GM12878 (cell line): ENCODE measurements at regions of chr1 and their contacts with region 1.

Region 1: GRCh38 chr1:201023517-201023902 is at the start of gene KIF21B:
- DNase-seq: no peak
- ATAC-seq: peak; percentile 68
- H3K4me3 ChIP-seq: peak within 1 kb of the TSS; percentile 93
- H3K27ac ChIP-seq: peak within 1 kb of the TSS; percentile 94
- H3K4me1 ChIP-seq: peaks cover 81% of the 10 kb centered on the region
- H3K27me3 ChIP-seq: no peaks in the 10 kb centered on the region
- CTCF ChIP-seq: no peak
- EP300 ChIP-seq: no peak
- POLR2A ChIP-seq: peak; percentile 74
- RAD21 ChIP-seq: no peak
- polyA plus RNA-seq, gene KIF21B: 2.3 to 2.9 TPM

Region 2: GRCh38 chr1:200890818-200891773 is 132.4 kb before region 1 on chr1:
- CTCF ChIA-PET with region 1: interaction called, 16 read pairs
- POLR2A ChIA-PET with region 1: interaction called, 23 read pairs
- RAD21 ChIA-PET with region 1: interaction called, 38 read pairs
- SMC1A ChIA-PET with region 1: interaction called, 23 read pairs
- in situ Hi-C with region 1: no loop called
- intact Hi-C with region 1: loop called (anchors 5 kb)
- DNase-seq: no peak
- ATAC-seq: peak; percentile 5
- H3K4me3 ChIP-seq: peak overlapping the region; percentile 45
- H3K27ac ChIP-seq: peak overlapping the region; percentile 69; the same call in 1 of the 2 replicates
- H3K4me1 ChIP-seq: peaks cover 61% of the 10 kb centered on the region
- H3K27me3 ChIP-seq: no peaks in the 10 kb centered on the region
- CTCF ChIP-seq: peak; percentile 42 to 58 (median 47)
- EP300 ChIP-seq: no peak
- POLR2A ChIP-seq: peak; percentile 53; the same call in 1 of the 2 replicates
- RAD21 ChIP-seq: peak; percentile 26; the same call in 1 of the 2 replicates

Region 3: DNA sequence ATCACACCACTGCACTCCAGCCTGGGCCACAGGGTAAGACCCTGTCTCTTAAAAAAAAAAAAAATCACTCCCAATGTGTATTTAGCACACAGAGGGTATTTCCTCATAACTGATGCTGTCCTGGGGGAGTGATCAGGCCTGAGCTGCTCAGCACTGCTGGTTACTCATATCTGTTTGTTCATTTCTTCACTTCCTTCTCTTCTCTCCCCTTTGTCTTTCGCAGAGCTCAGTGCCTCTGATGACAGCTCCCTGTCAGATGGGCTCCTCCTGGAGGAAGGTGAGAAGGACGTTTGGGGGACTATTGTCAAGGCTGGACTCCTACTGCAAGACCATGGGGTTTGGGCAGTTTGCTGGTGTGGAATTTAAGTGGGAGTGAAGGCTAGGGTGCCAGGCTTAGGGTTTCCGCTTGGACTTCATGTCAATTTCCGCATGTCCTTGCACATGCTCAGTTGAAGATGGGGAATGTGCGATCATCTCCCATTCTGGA is 115.9 kb before region 1 on chr1:
- CTCF ChIA-PET with region 1: interaction called, 3 read pairs
- POLR2A ChIA-PET with region 1: interaction called, 11 read pairs
- RAD21 ChIA-PET with region 1: interaction called, 19 read pairs
- SMC1A ChIA-PET with region 1: interaction called, 6 read pairs
- in situ Hi-C with region 1: no loop called
- intact Hi-C with region 1: no loop called
- DNase-seq: peak; percentile 67
- ATAC-seq: peak; percentile 74
- H3K4me3 ChIP-seq: no peak overlapping the region
- H3K27ac ChIP-seq: no peak overlapping the region
- H3K4me1 ChIP-seq: peaks cover 15% of the 10 kb centered on the region
- H3K27me3 ChIP-seq: no peaks in the 10 kb centered on the region
- CTCF ChIP-seq: peak in 1 of 3 experiments; percentile 26; a peak in 1 of 6 replicates
- EP300 ChIP-seq: peak; percentile 44 to 60; a peak in 2 of 4 replicates
- POLR2A ChIP-seq: no peak
- RAD21 ChIP-seq: peak; percentile 46

Region 4: GRCh38 chr1:201036188-201036842 is 12.8 kb after region 1 on chr1:
- CTCF ChIA-PET with region 1: interaction called, 250 read pairs
- POLR2A ChIA-PET with region 1: interaction called, 13 read pairs
- RAD21 ChIA-PET with region 1: interaction called, 24 read pairs
- SMC1A ChIA-PET with region 1: interaction called, 91 read pairs
- in situ Hi-C with region 1: no loop called
- intact Hi-C with region 1: no loop called
- DNase-seq: no peak
- ATAC-seq: no peak
- H3K4me3 ChIP-seq: no peak overlapping the region
- H3K27ac ChIP-seq: no peak overlapping the region
- H3K4me1 ChIP-seq: no peaks in the 10 kb centered on the region
- H3K27me3 ChIP-seq: no peaks in the 10 kb centered on the region
- CTCF ChIP-seq: no peak
- EP300 ChIP-seq: no peak
- POLR2A ChIP-seq: no peak
- RAD21 ChIP-seq: no peak

Region 5: DNA sequence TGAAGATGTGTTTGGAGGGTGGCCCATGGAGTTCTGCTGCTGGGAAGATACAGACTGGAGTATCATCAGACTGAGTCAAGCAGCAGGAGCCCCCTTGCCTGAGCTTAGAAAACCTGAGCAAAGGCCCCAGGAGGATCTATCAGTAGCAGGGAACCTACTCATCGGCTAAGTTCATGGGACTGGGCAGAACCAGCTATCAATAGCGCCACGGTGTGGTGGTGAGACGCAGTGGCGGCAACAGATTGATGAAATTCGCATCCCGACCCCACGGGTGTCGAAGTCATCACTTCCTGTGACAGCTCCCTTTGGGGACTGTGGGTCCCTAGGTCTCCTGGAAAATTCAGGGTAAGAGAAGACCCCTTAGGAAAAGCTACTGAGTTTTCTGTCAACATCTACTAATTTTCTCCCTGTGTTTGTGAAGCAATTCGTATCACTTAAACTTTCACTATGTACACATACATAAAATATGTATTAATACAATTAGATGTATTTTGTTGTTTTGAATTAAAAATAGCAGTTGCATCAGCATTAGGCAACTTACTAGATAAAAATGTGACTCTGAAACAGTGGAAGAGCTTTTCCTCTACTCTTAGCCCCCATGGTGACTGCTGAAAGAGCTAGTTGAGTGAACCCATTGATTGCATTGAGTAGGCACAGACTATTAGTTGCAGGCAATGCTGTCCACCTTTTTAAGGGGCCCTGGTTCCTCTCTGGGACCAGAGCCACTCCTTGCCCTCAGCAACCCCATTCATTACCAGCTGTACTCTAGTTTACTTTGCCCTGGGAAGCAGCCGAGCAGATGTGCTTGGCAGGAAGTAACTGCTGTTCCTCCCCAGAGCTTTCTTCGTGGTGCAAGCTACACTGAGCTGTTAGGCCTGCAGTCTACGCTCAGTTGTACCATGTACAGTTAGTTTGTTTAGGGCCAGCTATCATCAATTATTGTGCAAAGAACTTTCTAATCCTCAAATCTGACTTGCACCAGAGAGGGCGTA is 96.0 kb after region 1 on chr1:
- CTCF ChIA-PET with region 1: interaction called, 11 read pairs
- POLR2A ChIA-PET with region 1: no interaction called
- RAD21 ChIA-PET with region 1: interaction called, 3 read pairs
- SMC1A ChIA-PET with region 1: interaction called, 4 read pairs
- in situ Hi-C with region 1: no loop called
- intact Hi-C with region 1: no loop called
- DNase-seq: no peak
- ATAC-seq: peak; percentile 76
- H3K4me3 ChIP-seq: no peak overlapping the region
- H3K27ac ChIP-seq: no peak overlapping the region
- H3K4me1 ChIP-seq: no peaks in the 10 kb centered on the region
- H3K27me3 ChIP-seq: peaks cover 2 to 4% of the 10 kb centered on the region in 2 experiments; a peak in 3 of 4 replicates
- CTCF ChIP-seq: peak; percentile 65 to 77 (median 76)
- EP300 ChIP-seq: no peak
- POLR2A ChIP-seq: no peak
- RAD21 ChIP-seq: peak; percentile 49